GM12878 (cell line): ENCODE measurements at regions of chr9 and their contacts with region 1.

Region 1: DNA sequence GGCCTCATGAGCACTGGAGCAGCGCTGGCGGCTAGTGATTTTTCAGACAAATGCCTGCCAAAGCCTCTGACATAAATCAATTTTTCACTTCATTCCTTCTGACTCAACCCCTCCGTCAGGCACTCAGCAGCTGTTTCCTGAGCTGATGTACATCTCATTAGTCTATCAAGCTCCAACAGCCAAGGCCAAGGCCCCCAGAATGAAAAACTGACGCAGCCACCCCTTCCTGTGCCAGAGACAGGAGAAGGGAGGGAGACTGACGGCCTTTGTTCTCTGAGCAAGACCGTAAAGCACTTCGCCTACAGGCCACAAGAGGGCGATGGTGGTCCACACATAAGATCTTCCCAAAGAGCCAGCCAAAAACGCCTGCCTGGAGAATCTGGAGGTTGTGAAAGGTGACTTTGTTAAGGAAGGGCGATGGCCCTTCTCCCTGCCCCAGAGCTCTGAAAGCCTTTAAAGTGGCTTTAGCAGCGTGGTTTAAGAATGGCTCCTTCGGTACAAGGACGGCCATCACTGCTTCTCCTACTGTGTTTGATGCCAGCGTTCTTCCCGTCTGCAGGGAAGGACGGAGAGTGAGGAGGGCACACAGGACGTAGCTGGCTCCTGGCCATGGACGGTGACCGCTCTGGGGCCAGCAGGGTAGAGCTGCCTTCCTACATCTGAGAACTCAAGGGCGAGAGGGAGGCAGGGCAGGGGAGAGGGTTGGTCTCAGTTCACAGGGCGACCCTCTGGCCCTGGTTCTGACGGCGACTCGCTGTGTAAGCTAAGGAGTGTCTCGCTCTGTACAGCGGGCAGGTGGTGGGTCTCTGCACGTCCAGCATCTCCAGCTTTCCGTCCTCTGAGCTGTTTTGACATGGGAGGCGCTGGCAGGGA is 37.0 kb downstream of the ALG2 start:
- DNase-seq: peak; percentile 80
- ATAC-seq: peak; percentile 79
- H3K4me3 ChIP-seq: no peak overlapping the region
- H3K27ac ChIP-seq: peak overlapping the region; percentile 49
- H3K4me1 ChIP-seq: peaks cover 66% of the 10 kb centered on the region
- H3K27me3 ChIP-seq: no peaks in the 10 kb centered on the region
- CTCF ChIP-seq: peak; percentile 90 to 98 (median 94)
- EP300 ChIP-seq: no peak; a peak in 1 of 4 replicates
- POLR2A ChIP-seq: 0 out of 2 replicates have a peak, but pooled peaks have one; percentile 18
- RAD21 ChIP-seq: peak; percentile 93

Region 2: DNA sequence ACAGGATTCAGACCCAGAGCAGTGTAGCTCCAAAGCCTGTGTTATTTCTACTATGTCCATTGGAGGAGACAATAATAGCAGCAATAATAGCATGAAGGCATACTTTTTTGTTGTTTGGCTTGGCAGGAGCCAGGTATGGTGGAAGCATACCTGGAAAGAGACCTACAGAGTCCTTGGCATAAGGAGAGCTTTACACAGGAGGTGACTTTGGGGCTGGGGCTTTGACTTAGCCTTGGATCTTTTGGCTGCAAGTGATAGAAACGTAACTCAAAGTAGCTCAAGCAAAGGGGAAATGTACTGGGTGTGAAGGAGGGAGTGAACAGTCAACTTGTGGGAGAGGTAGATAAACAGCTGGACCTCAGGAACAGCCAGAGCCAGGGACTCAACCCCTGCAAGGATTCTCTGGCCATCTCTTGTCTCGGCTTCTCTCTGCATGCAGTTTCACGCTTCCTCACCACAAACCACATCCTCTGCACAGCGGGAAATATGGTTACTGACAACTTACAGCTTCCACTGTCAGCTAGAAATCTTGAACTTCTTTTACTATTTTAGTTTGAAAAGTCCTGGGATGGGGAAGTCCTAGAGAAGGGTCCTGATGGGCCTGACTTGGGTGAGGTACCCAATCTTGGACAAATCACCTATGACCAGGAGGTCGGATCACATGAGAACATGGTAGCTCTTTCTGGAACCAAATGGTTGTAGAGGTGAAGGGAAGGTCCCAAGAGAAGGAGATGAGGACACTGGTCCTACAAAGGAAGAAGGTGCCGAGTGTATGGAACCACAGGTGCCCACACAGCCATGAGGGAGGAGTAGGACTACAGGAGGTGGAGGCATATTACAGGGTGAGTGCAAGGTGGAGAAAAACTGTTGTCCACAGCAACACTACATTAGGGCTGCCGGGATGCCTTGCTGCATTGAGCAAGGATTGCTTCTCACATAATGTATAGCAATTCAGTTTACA is 126.8 kb before region 1 on chr9:
- CTCF ChIA-PET with region 1: no interaction called
- POLR2A ChIA-PET with region 1: no interaction called
- RAD21 ChIA-PET with region 1: no interaction called
- SMC1A ChIA-PET with region 1: no interaction called
- in situ Hi-C with region 1: no loop called
- intact Hi-C with region 1: no loop called
- DNase-seq: peak; percentile 64
- ATAC-seq: peak; percentile 88
- H3K4me3 ChIP-seq: peak overlapping the region; percentile 25; the same call in 1 of the 2 replicates
- H3K27ac ChIP-seq: peak overlapping the region; percentile 15; the same call in 1 of the 2 replicates
- H3K4me1 ChIP-seq: peaks cover 27% of the 10 kb centered on the region
- H3K27me3 ChIP-seq: no peaks in the 10 kb centered on the region
- CTCF ChIP-seq: no peak
- EP300 ChIP-seq: no peak
- POLR2A ChIP-seq: no peak
- RAD21 ChIP-seq: no peak

Region 3: DNA sequence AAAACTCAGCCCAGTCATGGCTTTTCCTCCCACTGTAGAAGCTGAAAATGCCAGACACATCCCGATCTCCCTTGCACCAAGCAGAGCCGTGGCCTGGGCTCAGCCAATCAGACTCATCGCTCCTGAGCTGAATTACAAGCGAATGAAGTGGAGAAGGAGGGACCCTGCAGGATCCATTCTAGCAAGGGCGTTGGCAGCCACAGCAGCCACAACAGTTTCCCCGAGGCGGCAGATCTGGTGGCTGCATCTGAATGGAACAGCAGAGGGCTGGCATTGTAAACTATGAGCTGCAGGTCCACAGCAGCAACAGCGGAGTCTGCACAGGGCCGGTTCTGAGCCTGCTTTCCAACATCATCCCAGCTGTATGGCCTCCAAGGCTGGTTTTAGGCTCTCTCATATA is 13.3 kb after region 1 on chr9:
- CTCF ChIA-PET with region 1: interaction called, 96 read pairs
- POLR2A ChIA-PET with region 1: interaction called, 8 read pairs
- RAD21 ChIA-PET with region 1: interaction called, 18 read pairs
- SMC1A ChIA-PET with region 1: interaction called, 68 read pairs
- in situ Hi-C with region 1: no loop called
- intact Hi-C with region 1: no loop called
- DNase-seq: no peak
- ATAC-seq: no peak
- H3K4me3 ChIP-seq: no peak overlapping the region
- H3K27ac ChIP-seq: no peak overlapping the region
- H3K4me1 ChIP-seq: peaks cover 34% of the 10 kb centered on the region
- H3K27me3 ChIP-seq: no peaks in the 10 kb centered on the region
- CTCF ChIP-seq: no peak
- EP300 ChIP-seq: no peak
- POLR2A ChIP-seq: no peak
- RAD21 ChIP-seq: no peak

Region 4: DNA sequence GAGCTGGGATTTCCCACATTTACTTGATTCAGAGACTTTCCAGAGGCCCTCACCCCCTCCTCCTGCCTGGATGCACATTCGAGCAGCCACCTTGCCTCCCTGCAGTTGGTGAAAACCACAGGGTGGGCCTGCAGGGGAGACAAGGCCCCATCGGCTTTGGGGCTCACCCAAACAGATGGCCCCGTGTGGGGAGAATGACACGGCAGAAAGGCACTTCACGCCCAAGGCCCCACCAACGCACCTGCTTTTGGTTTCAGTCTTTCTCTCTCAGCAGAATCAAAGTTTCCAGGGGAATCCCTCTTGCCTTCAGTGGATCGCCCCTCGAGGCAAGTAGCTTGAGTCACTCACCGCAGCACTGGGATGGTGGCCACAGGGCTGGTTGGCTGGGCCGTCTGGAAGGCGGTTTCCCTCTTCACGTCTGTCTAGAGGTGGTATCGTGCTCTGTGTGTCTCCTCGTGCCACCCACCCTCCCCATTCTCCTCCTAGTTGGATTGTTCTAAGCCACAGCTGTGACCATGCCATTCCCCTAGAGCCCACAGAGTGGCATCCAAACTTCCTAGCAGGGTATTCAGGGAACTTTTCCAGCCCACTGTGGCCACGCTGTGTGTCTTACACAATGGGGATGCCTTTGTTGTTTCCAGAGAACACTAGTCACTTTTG is 69.2 kb after region 1 on chr9:
- CTCF ChIA-PET with region 1: interaction called, 17 read pairs
- POLR2A ChIA-PET with region 1: interaction called, 3 read pairs
- RAD21 ChIA-PET with region 1: interaction called, 6 read pairs
- SMC1A ChIA-PET with region 1: interaction called, 4 read pairs
- in situ Hi-C with region 1: no loop called
- intact Hi-C with region 1: loop called (anchors 5 kb)
- DNase-seq: peak; percentile 90
- ATAC-seq: peak; percentile 89
- H3K4me3 ChIP-seq: peak overlapping the region; percentile 29; the same call in 1 of the 2 replicates
- H3K27ac ChIP-seq: peak overlapping the region; percentile 96
- H3K4me1 ChIP-seq: peaks cover 34% of the 10 kb centered on the region
- H3K27me3 ChIP-seq: no peaks in the 10 kb centered on the region
- CTCF ChIP-seq: peak; percentile 2 to 17 (median 13); a peak in 3 of 6 replicates
- EP300 ChIP-seq: peak; percentile 75 to 89; a peak in 3 of 4 replicates
- POLR2A ChIP-seq: peak; percentile 81
- RAD21 ChIP-seq: no peak

Region 5: GRCh38 chr9:99368341-99369323 is 183.9 kb after region 1 on chr9:
- CTCF ChIA-PET with region 1: no interaction called
- POLR2A ChIA-PET with region 1: no interaction called
- RAD21 ChIA-PET with region 1: interaction called, 3 read pairs
- SMC1A ChIA-PET with region 1: interaction called, 4 read pairs
- in situ Hi-C with region 1: no loop called
- intact Hi-C with region 1: loop called (anchors 10 kb)
- DNase-seq: peak; percentile 24
- ATAC-seq: peak; percentile 84
- H3K4me3 ChIP-seq: peak overlapping the region; percentile 51
- H3K27ac ChIP-seq: no peak overlapping the region
- H3K4me1 ChIP-seq: peaks cover 20% of the 10 kb centered on the region
- H3K27me3 ChIP-seq: no peaks in the 10 kb centered on the region; a peak in 1 of 4 replicates
- CTCF ChIP-seq: no peak
- EP300 ChIP-seq: peak; percentile 81 to 89; a peak in 3 of 4 replicates
- POLR2A ChIP-seq: no peak
- RAD21 ChIP-seq: no peak

Region 6: GRCh38 chr9:99819856-99820684 is 635.4 kb after region 1 on chr9:
- CTCF ChIA-PET with region 1: interaction called, 6 read pairs
- POLR2A ChIA-PET with region 1: interaction called, 6 read pairs
- RAD21 ChIA-PET with region 1: interaction called, 4 read pairs
- SMC1A ChIA-PET with region 1: interaction called, 7 read pairs
- in situ Hi-C with region 1: no loop called
- intact Hi-C with region 1: loop called (anchors 2 kb)
- DNase-seq: peak; percentile 48
- ATAC-seq: peak; percentile 49
- H3K4me3 ChIP-seq: peak overlapping the region; percentile 91
- H3K27ac ChIP-seq: peak overlapping the region; percentile 92
- H3K4me1 ChIP-seq: peaks cover 17% of the 10 kb centered on the region
- H3K27me3 ChIP-seq: peaks cover 0 to 4% of the 10 kb centered on the region in 2 experiments; a peak in 2 of 4 replicates
- CTCF ChIP-seq: peak in 1 of 3 experiments; percentile 30; a peak in 2 of 6 replicates
- EP300 ChIP-seq: peak; percentile 80; a peak in 3 of 4 replicates
- POLR2A ChIP-seq: no peak; the same call in none of the 2 replicates
- RAD21 ChIP-seq: no peak

Region 7: DNA sequence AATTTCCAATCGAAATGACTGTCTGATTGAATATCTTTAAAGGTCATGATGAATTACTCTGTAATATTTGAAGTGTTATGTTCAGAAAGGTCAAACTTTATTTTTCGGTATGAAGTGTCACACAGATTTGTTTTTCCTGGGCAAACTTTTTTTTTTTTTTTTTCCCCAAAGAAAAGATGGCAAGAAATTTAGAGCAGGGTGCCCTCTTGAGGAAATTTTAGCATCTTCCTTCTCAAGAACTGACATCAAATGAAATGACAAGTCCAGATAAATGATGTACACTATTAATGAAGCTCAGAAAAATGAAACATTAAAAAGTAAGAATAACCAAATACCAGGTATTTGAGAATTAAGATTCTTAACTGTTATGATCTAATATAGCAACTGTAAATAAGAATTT is 1038.0 kb after region 1 on chr9:
- CTCF ChIA-PET with region 1: interaction called, 8 read pairs
- POLR2A ChIA-PET with region 1: no interaction called
- RAD21 ChIA-PET with region 1: interaction called, 6 read pairs
- SMC1A ChIA-PET with region 1: interaction called, 4 read pairs
- in situ Hi-C with region 1: loop called (anchors 10 kb)
- intact Hi-C with region 1: loop called (anchors 5 kb)
- DNase-seq: no peak
- ATAC-seq: no peak
- H3K4me3 ChIP-seq: no peak overlapping the region
- H3K27ac ChIP-seq: no peak overlapping the region
- H3K4me1 ChIP-seq: peaks cover 20% of the 10 kb centered on the region
- H3K27me3 ChIP-seq: no peaks in the 10 kb centered on the region
- CTCF ChIP-seq: peak; percentile 12 to 43 (median 26); a peak in 2 of 6 replicates
- EP300 ChIP-seq: no peak
- POLR2A ChIP-seq: no peak
- RAD21 ChIP-seq: peak; percentile 61